Esophagus muscularis mucosa (tissue), 4 donors: ENCODE measurements at regions of chr12 and their contacts with region 1.

Region 1: GRCh38 chr12:120086801-120087621 is 29.5 kb downstream of the RAB35 start:
- DNase-seq: peak; percentile 100
- H3K4me3 ChIP-seq: peak overlapping the region; percentile 46 to 55 (median 50)
- H3K27ac ChIP-seq: peak overlapping the region; percentile 53 to 81 (median 68)
- H3K4me1 ChIP-seq: peaks cover 11 to 18% (median 14%) of the 10 kb centered on the region in 4 donors
- H3K27me3 ChIP-seq: no peaks in the 10 kb centered on the region
- CTCF ChIP-seq: peak in 2 of 3 experiments; percentile 96 to 98
- EP300 ChIP-seq: no peak
- POLR2A ChIP-seq: no peak

Region 2: DNA sequence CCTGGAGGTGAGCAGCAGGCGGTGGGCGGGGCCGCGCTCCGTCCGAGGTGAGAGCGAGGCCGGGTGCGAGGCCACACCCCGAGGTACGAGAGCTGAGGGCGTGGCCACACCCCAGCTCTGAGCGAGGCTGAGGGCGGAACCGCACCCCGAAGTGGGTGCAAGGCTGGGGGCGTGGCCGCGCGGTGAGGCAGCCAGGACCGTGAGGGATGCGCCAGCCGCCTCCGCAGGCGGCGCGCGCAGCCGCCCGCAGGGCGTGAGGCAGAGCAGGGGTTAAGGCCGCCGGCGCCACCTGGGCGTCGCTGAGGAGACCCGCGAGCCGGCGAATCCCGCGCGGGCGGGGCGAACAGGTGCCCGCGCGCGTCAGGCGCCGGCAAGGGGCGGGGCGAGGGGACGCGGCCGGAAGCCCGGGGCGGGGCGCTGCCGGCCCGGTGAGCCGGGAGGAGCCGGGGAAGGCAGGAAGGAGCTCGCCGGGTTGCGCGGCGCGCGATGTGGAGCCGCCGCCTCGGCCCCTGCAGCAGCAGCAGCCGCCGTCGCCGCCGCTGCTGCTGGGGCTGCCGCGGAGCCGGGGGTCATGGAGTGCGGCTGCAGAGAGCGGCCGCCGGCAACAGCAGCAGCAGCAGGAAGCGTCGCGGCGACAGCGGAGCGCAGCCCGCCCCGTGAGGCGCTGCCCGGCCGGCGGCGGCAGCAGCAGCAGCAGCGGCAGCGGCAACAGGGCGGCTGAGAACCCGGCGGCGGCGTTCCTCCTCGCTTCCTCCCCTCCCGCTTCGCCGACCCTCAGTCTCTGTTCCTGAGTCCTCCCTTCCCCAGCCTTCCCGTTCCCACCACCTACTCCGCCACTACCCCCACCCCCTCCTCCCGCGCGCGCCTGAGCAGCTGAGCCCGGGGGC is 98.0 kb before region 1 on chr12 and contains the start of gene BICDL1:
- intact Hi-C with region 1: loop called (anchors 10 kb)
- DNase-seq: no peak
- H3K4me3 ChIP-seq: peak within 1 kb of the TSS; percentile 53 to 66 (median 58)
- H3K27ac ChIP-seq: peak within 1 kb of the TSS in 2 of 4 donors; percentile 36 to 57
- H3K4me1 ChIP-seq: peaks cover 13 to 26% (median 18%) of the 10 kb centered on the region in 4 donors
- H3K27me3 ChIP-seq: peaks cover 0 to 55% (median 2%) of the 10 kb centered on the region in 4 donors
- CTCF ChIP-seq: no peak
- EP300 ChIP-seq: no peak
- POLR2A ChIP-seq: no peak
- total RNA-seq, gene BICDL1: 0.17 to 1.2 (median 0.77) TPM

Region 3: DNA sequence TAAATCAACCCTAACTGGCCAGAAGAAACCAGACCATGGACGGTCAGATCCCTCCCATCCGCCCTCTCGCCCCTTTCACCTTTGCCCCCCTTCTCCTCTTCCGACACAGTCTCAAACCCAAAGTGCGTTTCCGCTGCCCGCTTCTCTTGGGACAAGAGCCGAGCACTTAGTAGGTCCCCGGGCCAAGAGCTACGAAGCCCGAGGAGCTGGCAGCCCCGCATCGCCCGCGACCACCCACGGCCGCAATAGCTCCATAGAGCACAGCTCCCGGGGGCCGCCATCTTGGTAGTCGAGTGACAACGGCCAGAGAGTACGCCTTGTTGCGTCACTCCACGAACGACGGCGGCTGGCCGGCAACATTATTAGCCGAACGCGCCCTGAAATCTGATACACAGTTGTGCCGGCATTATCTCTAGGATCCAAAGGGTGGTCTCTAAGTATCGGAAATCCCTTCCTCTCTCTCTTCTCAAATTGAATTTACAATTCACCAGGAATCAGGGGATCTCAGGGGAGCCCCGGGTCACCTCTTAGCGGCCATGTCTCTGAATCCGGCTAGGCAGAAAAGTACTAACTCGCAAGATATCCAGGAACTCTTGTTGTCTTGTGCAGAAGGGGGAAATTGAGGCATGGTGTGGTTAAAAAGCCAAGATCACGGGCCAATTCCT is 442.0 kb after region 1 on chr12 and contains the start of gene COQ5:
- intact Hi-C with region 1: no loop called
- DNase-seq: peak; percentile 97
- H3K4me3 ChIP-seq: peak within 1 kb of the TSS; percentile 69 to 94 (median 80)
- H3K27ac ChIP-seq: peak within 1 kb of the TSS; percentile 90 to 95 (median 94)
- H3K4me1 ChIP-seq: peaks cover 0 to 23% (median 20%) of the 10 kb centered on the region in 4 donors
- H3K27me3 ChIP-seq: no peaks in the 10 kb centered on the region
- CTCF ChIP-seq: no peak
- EP300 ChIP-seq: no peak
- POLR2A ChIP-seq: no peak
- total RNA-seq, gene COQ5: 12.1 to 25.3 (median 21.4) TPM